ENCODE measurements at regions of chr9 and their contacts with region 1.

Region 1: GRCh38 chr9:109244157-109245132 is 76.4 kb downstream of the EPB41L4B start:
- DNase-seq: peak; percentile 81
- ATAC-seq: peak; percentile 69
- H3K4me3 Mint-ChIP-seq: no peak overlapping the region
- H3K27ac Mint-ChIP-seq: no peak overlapping the region
- H3K4me1 Mint-ChIP-seq: no peaks in the 10 kb centered on the region
- H3K27me3 Mint-ChIP-seq: peaks cover 23% of the 10 kb centered on the region

Region 2: DNA sequence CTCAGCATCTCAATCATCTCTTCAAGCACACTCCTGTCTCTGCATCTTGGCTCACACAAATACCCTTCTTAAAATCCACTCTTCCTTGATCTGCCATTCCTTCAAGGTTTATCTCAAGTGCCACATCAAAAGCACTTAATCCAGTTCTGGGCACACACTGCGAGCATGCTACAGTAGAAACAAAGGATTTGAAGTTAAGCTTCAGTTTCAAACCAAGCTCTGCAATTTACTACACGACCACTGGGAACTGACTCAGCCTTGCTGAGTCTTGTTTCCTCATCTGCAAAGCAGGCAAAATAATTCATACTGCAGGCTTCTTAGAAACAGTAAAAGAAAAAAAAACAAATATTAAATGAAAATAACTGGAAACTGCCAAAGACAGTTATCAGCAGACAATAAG is 180.7 kb before region 1 on chr9:
- CTCF ChIA-PET with region 1: no interaction called
- POLR2A ChIA-PET with region 1: no interaction called
- intact Hi-C with region 1: no loop called
- DNase-seq: no peak
- ATAC-seq: no peak
- H3K4me3 Mint-ChIP-seq: no peak overlapping the region
- H3K27ac Mint-ChIP-seq: peak overlapping the region; percentile 2
- H3K4me1 Mint-ChIP-seq: peaks cover 2% of the 10 kb centered on the region
- H3K27me3 Mint-ChIP-seq: no peaks in the 10 kb centered on the region

Region 3: GRCh38 chr9:109411798-109412352 is 167.4 kb after region 1 on chr9:
- CTCF ChIA-PET with region 1: interaction called, 3 read pairs
- POLR2A ChIA-PET with region 1: no interaction called
- intact Hi-C with region 1: loop called (anchors 2 to 5 kb)
- DNase-seq: peak; percentile 66
- ATAC-seq: peak; percentile 57
- H3K4me3 Mint-ChIP-seq: no peak overlapping the region
- H3K27ac Mint-ChIP-seq: peak overlapping the region; percentile 67
- H3K4me1 Mint-ChIP-seq: peaks cover 42% of the 10 kb centered on the region
- H3K27me3 Mint-ChIP-seq: peaks cover 17% of the 10 kb centered on the region

Region 4: DNA sequence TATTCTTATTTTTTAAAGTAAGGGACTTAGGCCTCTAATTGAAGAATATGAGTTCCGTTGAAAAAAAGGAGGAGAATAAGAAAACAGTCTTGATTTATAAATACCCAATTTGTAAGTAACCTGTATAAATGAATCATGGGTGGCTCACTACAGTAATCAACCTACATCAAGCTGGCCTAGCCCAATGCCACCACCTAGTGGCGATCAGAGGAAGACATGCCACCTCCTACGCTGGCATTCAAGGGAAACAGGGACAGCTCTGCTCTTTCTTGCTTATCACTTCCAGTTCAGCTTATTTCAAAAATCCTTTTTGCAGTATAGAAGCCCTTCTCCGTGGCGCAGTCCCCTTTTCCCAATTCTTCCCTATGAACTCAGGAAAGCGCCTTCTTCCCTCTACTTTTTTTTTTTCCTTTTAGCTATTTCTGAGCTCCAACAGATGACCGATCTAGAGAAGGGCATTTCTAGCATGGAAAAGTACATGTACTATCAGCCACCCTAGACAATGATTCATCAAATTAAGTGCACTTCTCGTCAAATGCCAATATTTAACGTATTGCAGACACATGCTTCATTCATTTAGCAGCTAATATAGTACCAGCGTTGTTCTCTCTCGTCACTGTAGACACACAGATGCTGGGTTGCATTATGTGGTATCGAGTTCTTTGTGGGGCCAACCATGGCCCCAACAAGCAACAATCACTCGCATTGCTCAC is 225.4 kb after region 1 on chr9:
- CTCF ChIA-PET with region 1: interaction called, 6 read pairs
- POLR2A ChIA-PET with region 1: no interaction called
- intact Hi-C with region 1: loop called (anchors 1 kb)
- DNase-seq: peak; percentile 85
- ATAC-seq: peak; percentile 97
- H3K4me3 Mint-ChIP-seq: no peak overlapping the region
- H3K27ac Mint-ChIP-seq: no peak overlapping the region
- H3K4me1 Mint-ChIP-seq: peaks cover 8% of the 10 kb centered on the region
- H3K27me3 Mint-ChIP-seq: peaks cover 11% of the 10 kb centered on the region

Region 5: DNA sequence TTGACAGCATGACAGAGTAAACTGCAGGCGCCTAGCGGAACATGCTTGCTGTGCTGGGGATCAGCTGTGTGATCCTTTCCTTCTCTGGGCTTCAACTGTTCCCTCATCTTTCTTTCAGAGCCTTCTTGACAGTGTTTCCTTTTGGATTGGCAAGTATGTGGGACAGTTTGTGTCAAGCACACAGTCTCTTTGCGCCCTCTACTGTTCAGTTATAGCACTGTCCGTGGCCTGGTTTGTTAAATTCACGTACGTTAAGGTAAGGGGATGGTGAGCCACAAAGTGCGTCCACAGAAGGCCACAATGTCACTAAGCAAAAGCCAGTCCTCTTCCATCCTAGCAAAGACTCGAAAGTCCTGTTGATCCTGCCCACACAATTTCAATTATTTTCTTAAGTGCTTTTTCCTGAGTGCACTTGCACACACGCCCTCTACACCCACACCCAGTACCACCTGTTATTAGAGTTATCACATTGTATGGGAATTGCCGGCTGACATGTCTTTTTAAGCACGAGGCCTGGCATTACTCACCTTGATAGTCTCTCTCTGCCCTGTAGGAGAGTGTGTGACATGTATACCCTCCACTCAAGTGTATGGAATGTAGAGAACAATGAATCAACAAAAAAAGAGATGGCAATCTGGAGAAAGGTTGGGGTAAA is 276.2 kb after region 1 on chr9:
- CTCF ChIA-PET with region 1: no interaction called
- POLR2A ChIA-PET with region 1: no interaction called
- intact Hi-C with region 1: loop called in 1 of 2 experiments (anchors 2 kb)
- DNase-seq: peak; percentile 70
- ATAC-seq: peak; percentile 82
- H3K4me3 Mint-ChIP-seq: no peak overlapping the region
- H3K27ac Mint-ChIP-seq: no peak overlapping the region
- H3K4me1 Mint-ChIP-seq: no peaks in the 10 kb centered on the region
- H3K27me3 Mint-ChIP-seq: peaks cover 9% of the 10 kb centered on the region

Region 6: DNA sequence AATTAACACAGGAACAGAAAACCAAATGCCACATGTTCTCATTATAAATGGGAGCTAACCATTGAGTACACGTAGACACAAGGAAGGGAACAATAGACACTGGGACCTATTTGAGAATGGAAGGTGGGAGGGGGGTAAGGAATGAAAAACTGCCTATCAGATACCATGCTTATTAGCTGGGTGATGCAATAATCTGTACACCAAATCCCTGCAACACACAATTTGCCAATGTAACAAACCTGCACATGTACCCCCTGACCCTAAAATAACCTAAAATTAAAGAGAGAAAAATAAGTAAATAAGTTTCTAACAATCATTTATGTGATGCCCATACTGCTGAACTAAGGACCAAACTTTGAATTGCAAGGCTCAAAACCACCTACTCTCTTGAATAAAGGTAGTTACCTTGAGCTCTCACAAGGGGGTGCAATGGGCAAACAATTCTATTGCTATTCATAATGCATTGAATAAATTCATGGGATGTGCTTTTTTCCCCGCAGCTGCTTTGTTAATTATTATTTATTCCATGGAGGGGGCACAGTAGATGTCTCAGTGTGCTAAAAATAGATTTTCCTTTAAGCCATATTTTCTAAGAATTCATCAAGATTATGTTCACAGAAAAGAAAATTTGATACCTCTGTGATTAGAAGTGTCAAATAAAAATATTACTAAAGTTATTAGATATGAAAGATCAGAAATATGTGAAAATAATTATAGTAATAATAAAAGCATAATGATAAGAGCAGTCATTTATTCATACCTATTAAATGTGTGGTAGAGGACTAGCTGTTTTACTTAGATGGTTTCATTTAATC is 329.8 kb after region 1 on chr9:
- CTCF ChIA-PET with region 1: no interaction called
- POLR2A ChIA-PET with region 1: no interaction called
- intact Hi-C with region 1: no loop called
- DNase-seq: peak; percentile 29
- ATAC-seq: peak; percentile 63
- H3K4me3 Mint-ChIP-seq: no peak overlapping the region
- H3K27ac Mint-ChIP-seq: no peak overlapping the region
- H3K4me1 Mint-ChIP-seq: no peaks in the 10 kb centered on the region
- H3K27me3 Mint-ChIP-seq: peaks cover 2% of the 10 kb centered on the region

Measured in activated CD4-positive, alpha-beta T cell treated with anti-CD3 and anti-CD28 coated beads for 36 hours (primary cell).